ENCODE measurements at regions of chr14 and their contacts with region 1.

Region 1: GRCh38 chr14:21734457-21735074 is 60.9 kb upstream of the OR4E1 start:
- DNase-seq: peak; percentile 54
- ATAC-seq: peak; percentile 70
- H3K4me3 ChIP-seq: no peak overlapping the region
- H3K27ac ChIP-seq: no peak overlapping the region
- H3K4me1 ChIP-seq: no peaks in the 10 kb centered on the region
- H3K27me3 ChIP-seq: peaks cover 46% of the 10 kb centered on the region
- CTCF ChIP-seq: peak in 2 of 3 experiments; percentile 61 to 86; a peak in 4 of 6 replicates
- POLR2A ChIP-seq: no peak
- RAD21 ChIP-seq: peak; percentile 32; the same call in 1 of the 2 replicates

Region 2: DNA sequence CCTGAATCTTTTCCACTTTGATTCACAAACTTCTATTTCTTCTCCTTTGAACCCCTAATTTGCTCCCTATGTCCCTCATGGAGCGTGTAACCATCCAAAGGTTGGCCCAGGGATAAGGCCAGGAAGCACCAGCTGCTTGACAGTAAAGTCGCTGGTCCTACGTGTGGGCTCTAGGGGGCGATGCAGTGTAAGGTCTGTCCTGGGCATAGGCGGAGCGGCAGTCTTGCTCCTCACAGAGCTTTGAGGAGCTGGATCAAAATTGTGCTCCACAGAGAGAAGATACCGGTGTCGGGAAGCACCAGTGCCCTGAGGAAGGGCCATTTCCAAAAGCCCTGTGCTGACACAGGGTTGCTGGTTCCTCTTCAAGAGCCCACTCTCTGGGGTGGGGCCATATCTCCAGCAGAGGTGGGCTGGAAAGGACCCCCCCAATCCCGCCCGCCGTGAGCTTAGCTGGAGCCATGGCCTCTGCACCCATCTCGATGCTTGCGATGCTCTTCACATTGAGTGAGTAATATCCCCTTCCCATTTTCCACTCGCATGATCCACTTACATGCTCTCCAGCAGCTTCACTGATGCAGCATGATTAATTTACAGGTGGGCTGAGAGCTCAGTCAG is 11.0 kb before region 1 on chr14:
- CTCF ChIA-PET with region 1: interaction called, 22 read pairs
- POLR2A ChIA-PET with region 1: no interaction called
- RAD21 ChIA-PET with region 1: no interaction called
- intact Hi-C with region 1: no loop called
- DNase-seq: peak; percentile 32
- ATAC-seq: peak; percentile 99
- H3K4me3 ChIP-seq: no peak overlapping the region
- H3K27ac ChIP-seq: no peak overlapping the region
- H3K4me1 ChIP-seq: no peaks in the 10 kb centered on the region
- H3K27me3 ChIP-seq: peaks cover 36% of the 10 kb centered on the region
- CTCF ChIP-seq: peak in 2 of 3 experiments; percentile 73 to 86; a peak in 4 of 6 replicates
- POLR2A ChIP-seq: no peak
- RAD21 ChIP-seq: 0 out of 2 replicates have a peak, but pooled peaks have one; percentile 24

Region 3: DNA sequence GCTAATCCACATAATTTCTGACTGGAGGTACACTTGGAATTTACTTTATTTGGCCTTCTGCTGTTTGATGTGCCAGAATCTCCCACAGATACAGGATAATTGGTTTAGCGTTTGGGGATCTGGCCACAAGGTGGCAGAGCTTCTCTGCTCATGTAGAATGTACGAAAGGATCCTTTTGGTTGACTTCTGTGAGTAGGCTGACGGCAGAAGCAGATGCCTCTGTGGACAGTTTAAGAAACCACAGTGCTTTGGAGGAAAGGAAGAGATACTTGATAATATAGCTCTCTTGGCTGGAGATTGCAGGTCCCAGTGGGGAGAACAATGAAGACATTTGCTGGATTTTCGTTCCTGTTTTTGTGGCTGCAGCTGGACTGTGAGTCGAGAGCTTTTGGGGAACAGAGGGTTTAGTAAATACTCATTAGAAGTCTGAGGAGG is 14.3 kb after region 1 on chr14:
- CTCF ChIA-PET with region 1: interaction called, 12 read pairs
- POLR2A ChIA-PET with region 1: no interaction called
- RAD21 ChIA-PET with region 1: no interaction called
- intact Hi-C with region 1: no loop called
- DNase-seq: peak; percentile 32
- ATAC-seq: peak; percentile 86
- H3K4me3 ChIP-seq: no peak overlapping the region
- H3K27ac ChIP-seq: no peak overlapping the region
- H3K4me1 ChIP-seq: no peaks in the 10 kb centered on the region
- H3K27me3 ChIP-seq: peaks cover 19% of the 10 kb centered on the region
- CTCF ChIP-seq: peak; percentile 22 to 78 (median 73); a peak in 5 of 6 replicates
- POLR2A ChIP-seq: no peak
- RAD21 ChIP-seq: peak; percentile 21

Region 4: DNA sequence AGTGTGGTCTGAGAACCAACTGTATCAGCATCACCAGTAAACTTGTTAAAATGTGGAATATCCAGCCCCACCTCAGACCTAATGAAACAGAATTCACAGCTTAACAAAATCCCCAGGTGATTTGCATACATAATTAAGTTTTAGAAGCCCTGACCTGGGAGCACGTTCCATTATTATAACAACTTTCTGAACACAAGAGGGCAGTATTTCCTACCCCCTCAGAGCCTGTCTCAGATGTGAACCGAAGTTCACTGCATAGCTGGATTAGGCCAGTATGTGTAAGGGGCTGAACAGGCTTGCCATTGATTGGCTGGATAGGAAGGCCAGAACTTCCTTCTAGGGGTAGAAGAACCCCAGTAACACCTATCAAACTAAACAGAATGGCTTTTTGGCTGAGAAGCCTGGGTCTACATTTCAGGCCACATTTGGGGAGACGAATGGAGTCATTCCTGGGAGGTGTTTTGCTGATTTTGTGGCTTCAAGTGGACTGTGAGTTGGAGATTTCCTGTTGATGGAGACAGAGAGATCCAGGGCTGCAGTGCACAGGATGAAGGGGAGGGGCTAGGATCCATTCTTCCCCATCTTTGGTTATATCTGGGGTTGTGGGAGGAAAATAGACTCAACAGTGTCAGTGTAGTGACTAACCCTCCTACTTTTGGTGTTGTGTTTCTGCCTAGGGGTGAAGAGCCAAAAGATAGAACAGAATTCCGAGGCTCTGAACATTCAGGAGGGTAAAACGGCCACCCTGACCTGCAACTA is 33.7 kb after region 1 on chr14:
- CTCF ChIA-PET with region 1: interaction called, 3 read pairs
- POLR2A ChIA-PET with region 1: no interaction called
- RAD21 ChIA-PET with region 1: no interaction called
- intact Hi-C with region 1: loop called (anchors 1 kb)
- DNase-seq: peak; percentile 32
- ATAC-seq: peak; percentile 96
- H3K4me3 ChIP-seq: no peak overlapping the region
- H3K27ac ChIP-seq: no peak overlapping the region
- H3K4me1 ChIP-seq: peaks cover 0 to 6% of the 10 kb centered on the region in 2 experiments; a peak in 1 of 4 replicates
- H3K27me3 ChIP-seq: no peaks in the 10 kb centered on the region
- CTCF ChIP-seq: peak; percentile 21 to 68 (median 55); a peak in 5 of 6 replicates
- POLR2A ChIP-seq: no peak
- RAD21 ChIP-seq: peak; percentile 26; the same call in 1 of the 2 replicates